Activated CD4-positive, alpha-beta memory T cell treated with anti-CD3 and anti-CD28 coated beads for 36 hours (primary cell): ENCODE measurements at regions of chr9 and their contacts with region 1.

Region 1: DNA sequence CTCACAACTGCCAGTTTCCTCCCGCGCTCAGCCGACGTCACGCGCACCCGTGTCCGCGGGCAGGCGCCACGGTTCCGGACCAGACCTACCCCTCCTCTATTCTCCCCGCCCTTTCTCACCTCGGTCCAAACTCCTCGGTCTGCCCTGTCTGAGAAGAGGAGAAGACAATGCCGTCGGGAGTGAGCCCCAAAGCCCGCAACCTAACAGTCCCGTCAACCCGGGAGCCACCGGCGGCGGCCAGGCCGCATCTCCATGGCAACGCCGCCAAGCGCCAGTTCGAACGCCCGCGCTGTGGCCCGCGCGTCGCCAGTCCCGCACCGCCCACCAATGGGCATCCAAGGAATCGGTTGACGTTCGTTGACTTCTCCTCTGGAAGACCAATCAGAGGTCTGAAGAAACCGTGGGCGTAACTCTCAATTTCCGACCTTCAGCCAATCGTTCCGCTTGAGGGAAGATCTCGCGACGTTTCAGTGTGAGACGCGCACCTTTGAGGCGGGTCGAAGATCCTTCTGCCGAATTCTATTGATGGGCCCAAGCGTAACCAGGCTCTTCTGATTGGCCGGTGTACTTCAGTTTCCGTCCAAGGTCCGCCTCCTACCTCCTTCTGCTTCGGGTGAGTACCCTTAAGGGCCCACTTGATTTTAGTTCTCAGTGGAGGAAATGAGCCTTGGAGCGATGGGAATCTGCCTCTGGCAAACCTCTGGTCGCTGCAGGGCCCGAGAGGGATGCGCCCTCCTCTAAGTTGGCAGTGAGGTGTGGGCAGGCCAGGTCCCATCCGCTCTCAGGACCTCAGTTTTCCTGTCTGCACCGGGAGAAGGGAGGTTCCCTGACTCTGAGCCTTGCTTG is at the starts of genes KIF24 and NUDT2:
- DNase-seq: peak; percentile 98
- H3K4me3 Mint-ChIP-seq: peak within 1 kb of the TSS; percentile 97
- H3K27ac Mint-ChIP-seq: peak within 1 kb of the TSS; percentile 94
- H3K4me1 Mint-ChIP-seq: peaks cover 30% of the 10 kb centered on the region
- H3K27me3 Mint-ChIP-seq: no peaks in the 10 kb centered on the region
- total RNA-seq, gene KIF24: 5.6 to 5.7 TPM
- total RNA-seq, gene NUDT2: 42.4 to 43.3 TPM

Region 2: DNA sequence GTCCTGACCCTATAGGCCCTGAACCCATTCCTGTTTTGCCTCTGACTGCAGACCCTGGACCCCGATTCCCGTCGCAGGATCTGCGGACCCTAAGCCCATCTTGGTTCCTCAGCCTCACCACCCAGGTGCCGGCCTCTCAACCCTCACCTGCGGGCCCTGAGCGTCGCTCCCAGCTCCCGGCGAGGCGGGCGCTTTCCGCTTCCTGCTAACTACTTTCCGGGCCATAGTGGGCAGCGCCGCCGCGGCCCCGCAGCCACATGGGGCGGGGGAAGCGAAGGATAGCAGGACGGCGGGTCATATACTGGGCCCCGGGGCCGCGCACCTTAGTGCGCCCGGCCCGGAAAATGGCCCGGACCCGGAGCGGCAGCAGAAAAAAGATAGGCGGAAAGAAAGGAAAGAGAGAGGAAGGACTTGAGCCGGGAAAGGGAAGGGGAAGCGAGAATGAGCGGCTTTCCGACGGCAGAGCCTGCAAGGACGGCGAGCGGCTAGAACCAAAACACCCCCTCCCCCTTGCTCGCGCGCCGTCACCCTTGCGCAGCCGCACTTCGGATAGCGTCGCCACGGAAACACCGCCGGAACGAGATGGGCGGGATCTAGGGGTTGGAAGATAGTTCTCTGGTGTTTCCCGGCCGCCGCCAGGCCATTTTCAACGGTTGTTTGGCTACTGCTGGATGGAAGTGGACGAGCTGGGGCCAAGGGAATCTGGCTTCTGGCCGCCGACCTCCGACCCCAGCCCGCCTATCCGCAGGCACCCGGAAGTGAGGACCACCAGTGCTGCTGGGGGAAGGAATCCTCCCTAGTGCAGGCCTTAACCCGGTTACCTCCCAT is 202.8 kb before region 1 on chr9 and contains the start of gene DCAF12:
- CTCF ChIA-PET with region 1: no interaction called
- POLR2A ChIA-PET with region 1: no interaction called
- intact Hi-C with region 1: loop called (anchors 1 kb)
- DNase-seq: peak; percentile 94
- H3K4me3 Mint-ChIP-seq: peak within 1 kb of the TSS; percentile 98
- H3K27ac Mint-ChIP-seq: peak within 1 kb of the TSS; percentile 94
- H3K4me1 Mint-ChIP-seq: peaks cover 35% of the 10 kb centered on the region
- H3K27me3 Mint-ChIP-seq: no peaks in the 10 kb centered on the region
- total RNA-seq, gene DCAF12: 32.5 to 35.4 TPM

Region 3: DNA sequence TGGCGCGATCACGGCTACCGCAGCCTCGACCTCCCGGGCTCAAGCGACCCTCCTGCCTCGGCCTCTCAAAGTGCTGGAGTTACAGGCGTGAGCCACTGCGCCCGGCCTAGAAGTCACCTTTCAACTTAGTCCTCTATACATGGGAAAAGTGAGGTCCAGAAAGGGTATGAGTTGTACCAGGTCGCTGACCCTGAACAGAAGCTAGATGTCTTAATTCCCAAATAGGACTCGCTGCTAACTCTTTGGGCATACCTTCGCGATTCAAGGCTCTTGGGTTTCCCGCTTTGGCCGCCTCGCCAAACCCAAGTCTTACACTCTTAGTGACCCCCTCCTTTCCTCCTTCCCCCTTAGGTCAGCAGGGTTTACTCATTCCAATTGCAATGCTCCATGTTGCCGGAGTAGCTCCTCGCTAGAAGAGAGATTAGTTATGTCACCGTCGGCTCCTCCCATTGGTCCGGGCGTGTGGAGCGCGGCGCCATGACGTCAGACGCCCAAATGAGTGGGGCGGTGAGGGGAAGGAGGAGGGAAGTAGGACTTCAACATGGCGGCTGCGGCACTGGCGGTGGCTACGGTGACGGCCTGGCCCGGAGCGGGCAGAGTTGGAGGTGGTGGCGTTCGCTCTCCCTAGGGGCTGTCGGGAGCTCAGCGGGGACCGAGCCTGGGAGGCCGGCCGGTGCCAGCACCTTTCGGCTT is 150.5 kb before region 1 on chr9 and contains the start of gene UBAP1:
- CTCF ChIA-PET with region 1: no interaction called
- POLR2A ChIA-PET with region 1: no interaction called
- intact Hi-C with region 1: loop called (anchors 2 kb)
- DNase-seq: peak; percentile 98
- H3K4me3 Mint-ChIP-seq: peak within 1 kb of the TSS; percentile 90
- H3K27ac Mint-ChIP-seq: peak within 1 kb of the TSS; percentile 96
- H3K4me1 Mint-ChIP-seq: peaks cover 12% of the 10 kb centered on the region
- H3K27me3 Mint-ChIP-seq: no peaks in the 10 kb centered on the region
- total RNA-seq, gene UBAP1: 30.5 to 32.0 TPM